Left lung (tissue), 14 donors: ENCODE measurements at regions of chr5 and their contacts with region 1.

Region 1: GRCh38 chr5:55994574-55995333 is at the start of gene IL6ST:
- DNase-seq: peak; percentile 97 to 98 (median 97)
- ATAC-seq: peak; percentile 97
- H3K4me3 ChIP-seq: peak within 1 kb of the TSS; percentile 75 to 79
- H3K27ac ChIP-seq: peak within 1 kb of the TSS; percentile 98 to 99
- H3K4me1 ChIP-seq: peaks cover 9 to 51% of the 10 kb centered on the region in 2 donors
- H3K27me3 ChIP-seq: no peaks in the 10 kb centered on the region
- CTCF ChIP-seq: peak in 1 of 2 donors; percentile 34
- polyA plus RNA-seq, gene IL6ST: 166 to 225 (median 217) TPM

Region 2: GRCh38 chr5:56088967-56089829 is 94.4 kb after region 1 on chr5:
- intact Hi-C with region 1: loop called in 1 of 2 experiments (anchors 10 kb)
- DNase-seq: no peak
- ATAC-seq: peak; percentile 71
- H3K4me3 ChIP-seq: no peak overlapping the region
- H3K27ac ChIP-seq: no peak overlapping the region
- H3K4me1 ChIP-seq: peaks cover 0 to 5% of the 10 kb centered on the region in 2 donors
- H3K27me3 ChIP-seq: no peaks in the 10 kb centered on the region
- CTCF ChIP-seq: no peak